ENCODE measurements at regions of chr4 and their contacts with region 1.

Region 1: GRCh38 chr4:37693450-37694190 is 7.4 kb upstream of the RELL1 start:
- DNase-seq: peak; percentile 40
- H3K4me3 ChIP-seq: no peak overlapping the region
- CTCF ChIP-seq: no peak

Region 2: DNA sequence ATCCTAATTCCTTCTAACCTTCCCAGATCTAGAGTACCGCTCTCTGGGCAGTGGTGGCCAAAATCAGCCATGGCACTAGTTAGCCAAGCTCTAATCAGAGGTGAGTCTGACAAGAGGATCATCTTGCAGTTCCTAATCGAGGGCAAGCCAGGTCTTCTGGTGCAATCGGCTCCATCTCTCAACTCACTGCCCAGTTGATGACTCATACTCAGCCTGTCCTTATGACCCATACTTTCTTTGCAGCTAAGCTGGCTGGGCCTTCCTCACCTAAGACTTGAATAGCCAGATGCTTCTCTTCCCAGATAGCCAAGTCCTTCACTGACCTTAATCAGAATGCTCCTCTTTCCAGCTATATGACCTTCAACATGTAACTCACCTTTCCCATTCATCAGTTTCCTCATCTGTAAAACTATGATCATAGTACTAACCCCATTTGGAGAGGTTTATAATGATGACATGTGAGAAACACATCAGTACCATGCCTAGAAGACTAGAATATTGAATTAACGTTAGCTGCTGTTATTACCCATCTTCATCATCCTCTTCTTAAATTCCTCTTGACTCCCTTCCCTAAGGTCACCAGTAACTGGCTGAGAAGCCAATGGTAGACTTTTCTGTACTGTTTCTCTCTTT is 64.5 kb before region 1 on chr4:
- in situ Hi-C with region 1: loop called (anchors 5 kb)
- DNase-seq: peak; percentile 40
- H3K4me3 ChIP-seq: no peak overlapping the region
- CTCF ChIP-seq: no peak

Region 3: DNA sequence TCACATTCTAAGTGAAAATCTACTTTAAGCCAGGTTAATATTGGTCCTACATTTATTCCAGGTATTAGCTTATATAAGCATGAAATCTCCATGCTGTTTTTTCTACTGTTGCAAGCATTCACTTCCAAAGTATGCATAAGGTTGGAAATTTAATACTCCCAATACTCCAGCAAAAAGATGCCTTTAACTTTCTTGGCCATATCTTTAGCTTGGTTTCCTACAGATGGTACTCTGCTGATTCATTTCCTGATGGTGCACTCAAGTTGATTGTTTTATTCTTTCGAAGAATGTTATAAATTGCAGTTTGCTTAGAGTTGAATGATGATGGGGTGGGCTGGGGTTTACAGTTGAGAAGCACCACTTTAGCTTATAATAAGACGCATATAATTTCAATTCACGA is 596.7 kb after region 1 on chr4:
- in situ Hi-C with region 1: no loop called
- DNase-seq: peak; percentile 69
- H3K4me3 ChIP-seq: no peak overlapping the region
- CTCF ChIP-seq: no peak

Measured in astrocyte of the cerebellum (primary cell).